Panc1 (cell line): ENCODE measurements at regions of chr12 and their contacts with region 1.

Region 1: DNA sequence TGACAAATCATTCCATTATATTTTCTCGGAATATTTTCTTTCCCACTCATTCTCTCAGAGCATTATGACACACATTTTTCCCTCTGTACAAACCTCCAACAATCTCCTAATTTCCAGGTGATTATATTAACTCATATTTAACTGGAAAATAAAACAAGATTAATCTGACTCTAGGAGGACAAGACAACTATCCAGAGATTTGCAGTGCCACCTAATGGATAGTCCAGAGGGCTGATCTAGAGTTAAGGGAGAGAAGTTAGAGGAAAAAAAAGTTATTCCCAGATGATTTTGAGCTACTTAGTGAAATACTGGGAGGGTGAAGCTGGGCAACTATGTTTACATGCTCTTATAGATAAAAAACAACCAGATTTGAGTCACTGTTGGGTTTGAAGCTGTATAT is 161.7 kb downstream of the ALX1 start:
- DNase-seq: no peak
- ATAC-seq: no peak
- H3K4me3 ChIP-seq: no peak overlapping the region
- H3K27ac ChIP-seq: no peak overlapping the region
- H3K4me1 ChIP-seq: no peaks in the 10 kb centered on the region
- H3K27me3 ChIP-seq: no peaks in the 10 kb centered on the region
- CTCF ChIP-seq: peak; percentile 39; the same call in 1 of the 2 replicates

Region 2: GRCh38 chr12:85076688-85077430 is 364.9 kb before region 1 on chr12:
- CTCF ChIA-PET with region 1: no interaction called
- POLR2A ChIA-PET with region 1: no interaction called
- in situ Hi-C with region 1: no loop called
- intact Hi-C with region 1: loop called (anchors 5 kb)
- DNase-seq: peak; percentile 48
- ATAC-seq: peak; percentile 88
- H3K4me3 ChIP-seq: no peak overlapping the region
- H3K27ac ChIP-seq: no peak overlapping the region
- H3K4me1 ChIP-seq: no peaks in the 10 kb centered on the region
- H3K27me3 ChIP-seq: no peaks in the 10 kb centered on the region
- CTCF ChIP-seq: peak; percentile 68; the same call in 1 of the 2 replicates

Region 3: GRCh38 chr12:85147331-85147730 is 294.4 kb before region 1 on chr12:
- CTCF ChIA-PET with region 1: no interaction called
- POLR2A ChIA-PET with region 1: no interaction called
- in situ Hi-C with region 1: no loop called
- intact Hi-C with region 1: no loop called
- DNase-seq: no peak
- ATAC-seq: no peak
- H3K4me3 ChIP-seq: no peak overlapping the region
- H3K27ac ChIP-seq: no peak overlapping the region
- H3K4me1 ChIP-seq: no peaks in the 10 kb centered on the region
- H3K27me3 ChIP-seq: no peaks in the 10 kb centered on the region
- CTCF ChIP-seq: no peak

Region 4: DNA sequence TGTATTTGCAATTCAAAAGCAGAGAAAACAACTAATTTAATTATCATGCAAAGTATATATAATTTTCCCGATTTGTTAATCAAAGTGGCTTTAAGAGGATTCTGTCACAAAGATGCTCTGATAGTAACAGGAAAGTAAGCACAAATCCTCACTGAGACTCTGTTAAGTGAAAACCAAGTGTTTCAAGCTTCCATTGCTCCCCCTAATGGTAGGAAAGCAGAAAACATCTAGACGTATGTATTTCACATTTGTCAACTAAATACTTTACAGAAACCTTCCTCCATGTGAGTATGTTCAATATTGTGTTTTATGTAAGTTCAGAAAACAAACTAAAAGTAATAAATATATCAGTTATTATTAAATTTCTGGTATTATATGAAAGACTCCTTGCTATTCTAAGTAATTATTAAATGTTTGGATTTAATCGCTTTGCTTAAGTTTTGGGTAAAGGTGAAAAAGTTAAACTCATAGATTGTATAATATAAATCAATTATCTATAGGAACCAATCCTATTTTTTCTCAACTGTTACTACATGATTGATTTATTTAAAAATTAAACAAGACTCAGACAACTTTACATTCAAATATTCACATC is 430.9 kb after region 1 on chr12:
- CTCF ChIA-PET with region 1: interaction called, 18 read pairs
- POLR2A ChIA-PET with region 1: no interaction called
- in situ Hi-C with region 1: no loop called
- intact Hi-C with region 1: no loop called
- DNase-seq: peak; percentile 28
- ATAC-seq: no peak
- H3K4me3 ChIP-seq: no peak overlapping the region
- H3K27ac ChIP-seq: no peak overlapping the region
- H3K4me1 ChIP-seq: no peaks in the 10 kb centered on the region
- H3K27me3 ChIP-seq: no peaks in the 10 kb centered on the region
- CTCF ChIP-seq: peak; percentile 75; the same call in 1 of the 2 replicates